Transverse colon (tissue), 4 donors: ENCODE measurements at regions of chr1 and their contacts with region 1.

Region 1: GRCh38 chr1:58994664-58995063 is 210.8 kb upstream of the JUN start:
- DNase-seq: no peak
- H3K4me3 ChIP-seq: no peak overlapping the region
- H3K27ac ChIP-seq: no peak overlapping the region
- H3K4me1 ChIP-seq: no peaks in the 10 kb centered on the region
- H3K27me3 ChIP-seq: no peaks in the 10 kb centered on the region
- CTCF ChIP-seq: no peak
- EP300 ChIP-seq: no peak
- POLR2A ChIP-seq: no peak

Region 2: DNA sequence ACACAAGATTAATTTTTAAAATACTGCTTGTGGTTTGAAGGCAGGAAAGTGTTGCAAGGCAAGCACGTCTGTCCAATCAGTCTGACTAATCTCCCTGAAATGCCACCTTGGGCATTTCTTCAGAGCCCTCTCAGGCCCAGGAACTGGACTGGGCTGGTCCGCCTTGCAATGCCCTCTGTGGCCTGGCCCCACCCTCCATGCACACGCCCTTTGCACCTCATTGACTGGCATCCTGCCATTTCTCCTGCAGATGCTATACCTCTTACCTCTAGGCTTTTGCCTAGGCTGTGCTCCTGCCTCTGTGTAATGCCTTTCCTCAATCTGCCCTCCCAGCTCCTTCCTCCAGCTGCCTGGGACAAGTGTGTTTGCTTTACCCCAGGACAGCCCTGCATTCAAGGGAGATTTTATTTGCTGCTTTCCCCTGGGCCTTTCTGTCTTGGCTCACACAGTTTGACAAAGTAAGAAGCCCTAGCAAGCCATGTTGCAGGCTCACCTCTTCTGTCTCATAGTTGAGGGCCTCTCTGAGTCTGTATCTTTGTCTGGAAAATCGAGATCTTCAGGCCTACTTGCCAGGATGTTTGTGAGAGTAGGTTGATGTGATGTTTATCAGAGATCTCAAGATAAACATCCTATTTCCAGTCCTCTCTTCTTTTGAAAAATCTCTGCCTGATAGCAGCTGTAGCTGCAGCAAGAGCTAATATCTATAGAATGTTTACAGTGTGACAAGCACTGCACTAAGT is 61.6 kb before region 1 on chr1:
- in situ Hi-C with region 1: no loop called
- intact Hi-C with region 1: no loop called
- DNase-seq: peak; percentile 92
- H3K4me3 ChIP-seq: no peak overlapping the region
- H3K27ac ChIP-seq: peak overlapping the region; percentile 76 to 82 (median 80)
- H3K4me1 ChIP-seq: peaks cover 14 to 45% (median 34%) of the 10 kb centered on the region in 4 donors
- H3K27me3 ChIP-seq: no peaks in the 10 kb centered on the region
- CTCF ChIP-seq: peak in 1 of 5 experiments; percentile 24
- EP300 ChIP-seq: peak; percentile 38
- POLR2A ChIP-seq: peak; percentile 31

Region 3: DNA sequence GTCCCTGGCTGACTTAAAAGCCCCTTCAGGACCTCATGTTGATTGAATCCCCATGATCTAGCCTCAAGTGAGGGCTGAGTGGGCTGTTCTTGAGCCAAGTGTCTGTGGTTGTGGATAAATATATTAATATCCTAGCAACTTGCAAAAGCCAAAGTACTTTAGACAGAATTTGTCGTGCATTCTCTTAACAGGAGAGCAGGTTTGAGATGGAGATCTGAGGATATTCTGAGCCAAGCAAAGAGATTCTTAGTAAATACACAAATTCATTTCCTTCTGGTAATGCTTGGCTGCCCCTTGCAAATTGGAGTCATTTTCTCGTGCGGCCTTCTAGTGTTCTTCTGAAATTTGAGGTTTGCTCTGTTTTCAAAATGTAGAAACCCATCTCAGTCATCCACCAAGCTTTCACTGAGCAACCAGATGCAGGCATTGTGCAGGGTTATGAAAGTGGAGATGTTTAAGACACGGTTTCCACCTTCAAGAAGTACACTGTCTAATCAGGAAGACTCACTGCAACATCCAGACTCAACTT is 31.3 kb after region 1 on chr1:
- in situ Hi-C with region 1: no loop called
- intact Hi-C with region 1: loop called (anchors 2 kb)
- DNase-seq: no peak
- H3K4me3 ChIP-seq: no peak overlapping the region
- H3K27ac ChIP-seq: no peak overlapping the region
- H3K4me1 ChIP-seq: peaks cover 0 to 12% (median 5%) of the 10 kb centered on the region in 4 donors
- H3K27me3 ChIP-seq: no peaks in the 10 kb centered on the region
- CTCF ChIP-seq: no peak
- EP300 ChIP-seq: no peak
- POLR2A ChIP-seq: no peak